ENCODE measurements at regions of chr17 and their contacts with region 1.

Region 1: DNA sequence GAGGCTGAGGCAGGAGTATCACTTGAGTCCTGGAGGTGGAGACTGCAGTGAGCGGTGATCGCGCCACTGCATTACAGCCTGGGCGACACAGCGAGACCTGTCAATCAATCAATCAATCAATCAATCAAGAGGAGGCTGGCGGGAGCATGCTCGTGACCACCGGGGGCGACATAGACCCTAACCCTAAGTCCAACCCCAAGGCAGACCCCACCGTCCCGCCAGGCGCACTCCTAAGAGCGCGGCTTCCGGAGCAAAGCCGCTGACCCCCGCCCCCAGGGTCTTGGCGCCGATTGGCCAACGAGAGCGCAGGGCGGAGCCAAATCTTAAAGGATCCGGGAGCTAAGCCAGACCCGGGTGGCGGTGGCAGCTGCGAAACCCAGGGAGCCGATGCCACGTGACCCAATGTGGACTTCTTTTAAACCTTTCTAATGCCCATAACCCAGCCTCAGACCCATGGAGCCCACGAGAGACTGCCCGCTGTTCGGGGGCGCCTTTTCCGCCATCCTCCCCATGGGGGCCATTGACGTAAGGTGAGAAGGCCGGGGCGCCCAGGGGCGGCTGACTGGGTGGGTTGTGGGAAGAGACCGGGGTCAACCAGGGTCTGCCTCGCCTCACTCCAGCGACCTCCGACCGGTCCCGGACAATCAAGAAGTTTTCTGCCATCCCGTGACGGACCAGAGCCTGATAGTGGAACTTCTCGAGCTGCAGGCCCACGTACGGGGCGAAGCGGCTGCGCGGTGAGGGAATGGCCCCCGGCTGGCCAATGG is at the start of gene RANGRF:
- DNase-seq: peak; percentile 81
- H3K4me3 Mint-ChIP-seq: peak within 1 kb of the TSS; percentile 84
- H3K27ac Mint-ChIP-seq: peak within 1 kb of the TSS; percentile 58
- H3K4me1 Mint-ChIP-seq: peaks cover 10% of the 10 kb centered on the region
- H3K27me3 Mint-ChIP-seq: no peaks in the 10 kb centered on the region
- CTCF ChIP-seq: no peak
- total RNA-seq, gene RANGRF: 11.1 and 15.6 TPM in 2 replicates

Region 2: DNA sequence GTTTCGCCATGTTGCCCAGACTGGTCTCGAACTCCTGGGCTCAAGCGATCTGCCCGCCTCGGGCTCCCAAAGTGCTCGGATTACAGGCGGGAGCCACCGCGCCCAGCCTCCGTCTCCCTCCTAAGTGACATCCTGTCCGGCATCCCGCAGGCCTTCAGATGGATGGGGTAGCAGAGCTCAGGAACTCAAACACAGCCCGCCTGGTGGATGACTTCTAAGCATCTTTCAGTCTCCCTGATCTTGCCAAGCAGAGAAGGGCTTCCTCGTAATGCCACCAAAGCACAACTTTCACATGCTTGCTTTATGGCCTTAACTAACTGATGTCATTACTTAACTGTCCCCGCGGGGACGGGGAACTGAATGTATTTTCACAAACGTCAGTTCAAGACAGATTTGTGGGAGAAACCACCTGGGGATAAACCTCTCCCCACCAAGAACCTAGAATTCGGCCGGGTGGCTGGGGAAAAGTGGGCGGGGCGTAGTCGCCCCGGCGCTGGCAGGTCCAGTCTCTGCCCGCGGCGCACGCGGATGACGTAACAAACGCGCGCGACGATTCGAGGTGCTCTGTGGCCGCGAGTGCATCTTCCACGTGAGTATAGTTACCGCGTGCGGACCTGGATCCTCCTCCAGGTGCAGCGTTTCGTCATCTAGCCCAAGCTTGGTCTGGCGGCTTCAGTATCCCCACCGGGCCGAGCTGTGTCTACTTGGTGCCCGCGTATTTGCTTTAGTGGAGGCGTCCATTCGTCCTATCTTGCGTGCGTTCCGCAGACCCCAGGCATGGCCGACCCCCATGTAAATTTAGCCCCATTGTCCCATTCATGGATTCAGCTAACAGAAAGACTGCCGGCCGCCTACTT is 39.5 kb before region 1 on chr17 and contains the start of gene PFAS:
- CTCF ChIA-PET with region 1: no interaction called
- intact Hi-C with region 1: loop called (anchors 5 kb)
- DNase-seq: peak; percentile 92
- H3K4me3 Mint-ChIP-seq: peak within 1 kb of the TSS; percentile 78
- H3K27ac Mint-ChIP-seq: peak within 1 kb of the TSS; percentile 90
- H3K4me1 Mint-ChIP-seq: peaks cover 19% of the 10 kb centered on the region
- H3K27me3 Mint-ChIP-seq: no peaks in the 10 kb centered on the region
- CTCF ChIP-seq: no peak
- total RNA-seq, gene PFAS: 62.3 and 66.8 TPM in 2 replicates

Measured in Calu3 (cell line).